Breast epithelium (tissue), 4 donors: ENCODE measurements at regions of chr4 and their contacts with region 1.

Region 1: GRCh38 chr4:73648478-73648877 is 28.2 kb upstream of the RASSF6 start:
- DNase-seq: no peak
- H3K4me3 ChIP-seq: no peak overlapping the region
- H3K27ac ChIP-seq: no peak overlapping the region
- H3K4me1 ChIP-seq: no peaks in the 10 kb centered on the region
- H3K27me3 ChIP-seq: no peaks in the 10 kb centered on the region
- CTCF ChIP-seq: no peak
- POLR2A ChIP-seq: no peak

Region 2: GRCh38 chr4:73258686-73259570 is 389.6 kb before region 1 on chr4 and contains the start of gene ANKRD17:
- intact Hi-C with region 1: no loop called
- DNase-seq: peak; percentile 89 to 91
- H3K4me3 ChIP-seq: peak within 1 kb of the TSS; percentile 61 to 94 (median 82)
- H3K27ac ChIP-seq: peak within 1 kb of the TSS; percentile 99
- H3K4me1 ChIP-seq: peaks cover 5 to 7% of the 10 kb centered on the region in 2 donors
- H3K27me3 ChIP-seq: no peaks in the 10 kb centered on the region
- CTCF ChIP-seq: peak; percentile 37 to 71 (median 71)
- POLR2A ChIP-seq: peak; percentile 78
- total RNA-seq, gene ANKRD17: 53.0 to 81.4 (median 69.2) TPM

Region 3: GRCh38 chr4:74223801-74224533 is 575.5 kb after region 1 on chr4:
- intact Hi-C with region 1: loop called (anchors 5 kb)
- DNase-seq: no peak
- H3K4me3 ChIP-seq: no peak overlapping the region
- H3K27ac ChIP-seq: no peak overlapping the region
- H3K4me1 ChIP-seq: no peaks in the 10 kb centered on the region
- H3K27me3 ChIP-seq: no peaks in the 10 kb centered on the region
- CTCF ChIP-seq: no peak
- POLR2A ChIP-seq: no peak